Dendritic cell treated with granulocyte-macrophage colony-stimulating factor and Interleukin-4, amounts not matched to agents 40 ng/mL and 50 ng/mL, for 4 days (primary cell): ENCODE measurements at regions of chr3 and their contacts with region 1.

Region 1: DNA sequence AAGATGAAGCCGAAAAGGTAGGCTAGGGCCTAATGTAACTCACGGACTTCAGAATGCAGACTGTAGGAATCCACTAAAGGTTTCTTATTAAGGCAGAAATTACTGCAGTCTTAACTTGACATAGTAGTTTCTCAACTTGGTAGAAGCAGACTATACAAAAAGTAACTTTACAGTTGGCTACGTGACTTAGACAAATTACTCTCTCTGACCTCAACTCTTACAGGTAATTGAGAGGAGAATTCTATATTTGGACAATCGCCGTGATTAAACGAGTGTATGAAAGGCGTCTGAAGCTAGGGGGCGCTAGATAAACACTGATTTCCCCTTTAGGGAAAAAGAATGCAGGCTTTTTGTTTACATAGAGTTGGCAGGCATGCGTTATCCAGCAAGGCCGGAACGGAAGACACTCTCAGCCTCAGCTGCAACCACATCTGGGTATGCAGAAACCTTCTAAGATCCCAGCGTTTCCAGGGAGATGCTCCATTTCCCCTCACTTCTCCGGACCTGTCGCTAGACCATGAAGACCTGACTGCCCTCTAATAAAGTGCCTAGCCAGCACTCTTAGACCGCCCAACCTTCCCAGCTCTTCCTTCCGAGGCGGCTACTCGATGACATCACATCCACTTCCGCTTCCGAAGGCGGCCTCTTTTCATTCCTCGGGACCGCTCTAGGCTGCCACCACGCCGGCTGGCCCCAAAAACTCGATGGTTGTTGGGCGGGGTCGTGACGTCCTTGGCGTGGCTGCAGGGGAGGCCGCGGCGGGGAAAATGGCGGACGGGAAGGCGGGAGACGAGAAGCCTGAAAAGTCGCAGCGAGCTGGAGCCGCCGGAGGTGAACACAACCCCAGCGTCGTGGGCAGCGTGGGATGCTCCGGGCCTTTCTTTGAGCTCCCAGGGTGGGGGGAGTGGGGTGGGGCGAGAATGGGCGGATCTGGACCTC is at the start of gene PCNP:
- H3K4me3 Mint-ChIP-seq: peak within 1 kb of the TSS; percentile 82
- H3K27ac Mint-ChIP-seq: peak within 1 kb of the TSS; percentile 91
- H3K4me1 Mint-ChIP-seq: peaks cover 25% of the 10 kb centered on the region
- H3K27me3 Mint-ChIP-seq: peaks cover 7% of the 10 kb centered on the region

Region 2: GRCh38 chr3:100708967-100709841 is 864.5 kb before region 1 on chr3 and contains the start of gene TFG:
- intact Hi-C with region 1: loop called (anchors 5 kb)
- H3K4me3 Mint-ChIP-seq: peak within 1 kb of the TSS; percentile 92
- H3K27ac Mint-ChIP-seq: peak within 1 kb of the TSS; percentile 96
- H3K4me1 Mint-ChIP-seq: peaks cover 38% of the 10 kb centered on the region
- H3K27me3 Mint-ChIP-seq: peaks cover 10% of the 10 kb centered on the region

Region 3: DNA sequence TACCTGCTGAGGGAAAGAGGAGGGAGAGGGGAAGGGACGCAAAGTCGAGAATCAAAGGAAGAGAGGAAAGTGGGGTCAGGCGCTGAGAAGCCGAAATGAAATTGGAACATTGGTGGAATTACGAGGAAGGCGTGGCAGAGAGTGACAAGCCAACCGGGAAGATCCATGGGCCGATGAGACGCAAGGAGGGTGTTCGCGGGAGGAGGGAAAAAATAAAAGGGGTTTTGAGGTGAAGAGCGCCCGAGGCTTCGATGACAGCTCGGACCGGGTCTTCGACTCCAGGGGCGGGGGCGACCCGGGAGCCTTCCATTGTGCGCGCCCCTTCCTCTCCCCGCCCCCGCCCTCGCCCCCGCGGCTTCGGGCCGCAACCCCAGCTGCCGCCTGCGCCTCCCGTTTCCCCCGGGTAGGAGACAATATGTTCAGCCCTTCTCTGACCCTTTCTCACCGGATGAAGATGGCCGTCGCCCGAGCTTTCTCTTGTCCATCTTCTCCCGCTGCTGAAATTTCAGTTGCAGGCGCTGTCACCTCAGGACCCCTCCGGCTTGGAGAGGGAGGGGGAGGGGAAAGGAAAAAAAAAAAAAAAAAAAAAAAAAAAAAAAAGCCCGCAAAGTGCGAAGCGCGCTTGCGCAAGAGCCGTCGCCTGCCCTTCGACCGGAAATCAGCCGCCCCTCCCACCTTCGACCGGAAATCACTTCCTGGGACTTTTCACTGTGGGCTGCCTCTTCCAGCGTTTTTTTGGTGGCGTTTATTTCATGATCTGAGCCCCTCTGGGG is 60.9 kb before region 1 on chr3 and contains the start of gene SENP7:
- intact Hi-C with region 1: loop called (anchors 1 kb)
- H3K4me3 Mint-ChIP-seq: peak within 1 kb of the TSS; percentile 95
- H3K27ac Mint-ChIP-seq: peak within 1 kb of the TSS; percentile 91
- H3K4me1 Mint-ChIP-seq: peaks cover 19% of the 10 kb centered on the region
- H3K27me3 Mint-ChIP-seq: no peaks in the 10 kb centered on the region

Region 4: GRCh38 chr3:101531473-101532086 is 42.1 kb before region 1 on chr3:
- intact Hi-C with region 1: no loop called
- H3K4me3 Mint-ChIP-seq: no peak overlapping the region
- H3K27ac Mint-ChIP-seq: no peak overlapping the region
- H3K4me1 Mint-ChIP-seq: no peaks in the 10 kb centered on the region
- H3K27me3 Mint-ChIP-seq: no peaks in the 10 kb centered on the region

Region 5: GRCh38 chr3:101561630-101562328 is 11.9 kb before region 1 on chr3 and contains the start of gene TRMT10C:
- intact Hi-C with region 1: loop called (anchors 1 kb)
- H3K4me3 Mint-ChIP-seq: peak within 1 kb of the TSS; percentile 95
- H3K27ac Mint-ChIP-seq: peak within 1 kb of the TSS; percentile 94
- H3K4me1 Mint-ChIP-seq: peaks cover 32% of the 10 kb centered on the region
- H3K27me3 Mint-ChIP-seq: peaks cover 14% of the 10 kb centered on the region

Region 6: DNA sequence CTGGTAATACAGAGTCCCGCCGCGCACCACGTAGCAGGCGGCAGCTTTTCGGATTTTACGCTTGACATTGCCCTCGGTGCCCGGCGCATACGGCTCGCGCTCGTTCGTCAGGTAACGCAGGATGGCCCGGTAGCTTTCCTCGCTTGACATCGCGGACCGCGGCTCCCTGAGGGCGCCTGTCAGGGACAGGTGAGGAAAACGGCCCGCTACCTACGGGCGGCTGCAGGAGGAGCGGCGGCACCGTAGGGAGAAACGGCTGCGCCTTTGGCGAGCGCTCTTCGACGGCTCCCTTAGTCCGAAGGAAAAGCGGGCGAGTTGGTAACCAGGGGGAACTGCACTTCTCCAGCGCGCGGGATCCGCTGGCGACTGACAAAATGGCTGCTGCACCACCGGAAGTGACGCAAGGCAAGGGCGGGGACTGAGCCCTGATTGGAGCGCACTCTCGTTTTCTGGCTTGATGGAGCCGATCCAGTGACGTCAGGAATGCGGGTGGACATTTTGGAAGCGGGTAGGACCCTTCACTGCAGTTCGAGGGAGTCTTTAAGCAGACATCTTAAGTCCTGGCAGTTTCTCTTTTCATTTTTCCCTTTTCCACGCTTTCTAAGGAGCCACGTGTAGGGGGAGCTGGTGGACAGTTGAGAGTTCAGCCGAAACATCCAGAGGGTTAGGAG is 103.2 kb after region 1 on chr3 and contains the start of gene ZBTB11:
- intact Hi-C with region 1: loop called (anchors 2 kb)
- H3K4me3 Mint-ChIP-seq: peak within 1 kb of the TSS; percentile 89
- H3K27ac Mint-ChIP-seq: peak within 1 kb of the TSS; percentile 98
- H3K4me1 Mint-ChIP-seq: peaks cover 46% of the 10 kb centered on the region
- H3K27me3 Mint-ChIP-seq: no peaks in the 10 kb centered on the region

Region 7: GRCh38 chr3:101744735-101745134 is 171.0 kb after region 1 on chr3:
- intact Hi-C with region 1: no loop called
- H3K4me3 Mint-ChIP-seq: no peak overlapping the region
- H3K27ac Mint-ChIP-seq: no peak overlapping the region
- H3K4me1 Mint-ChIP-seq: no peaks in the 10 kb centered on the region
- H3K27me3 Mint-ChIP-seq: no peaks in the 10 kb centered on the region